BJ (cell line): ENCODE measurements at regions of chr12 and their contacts with region 1.

Region 1: DNA sequence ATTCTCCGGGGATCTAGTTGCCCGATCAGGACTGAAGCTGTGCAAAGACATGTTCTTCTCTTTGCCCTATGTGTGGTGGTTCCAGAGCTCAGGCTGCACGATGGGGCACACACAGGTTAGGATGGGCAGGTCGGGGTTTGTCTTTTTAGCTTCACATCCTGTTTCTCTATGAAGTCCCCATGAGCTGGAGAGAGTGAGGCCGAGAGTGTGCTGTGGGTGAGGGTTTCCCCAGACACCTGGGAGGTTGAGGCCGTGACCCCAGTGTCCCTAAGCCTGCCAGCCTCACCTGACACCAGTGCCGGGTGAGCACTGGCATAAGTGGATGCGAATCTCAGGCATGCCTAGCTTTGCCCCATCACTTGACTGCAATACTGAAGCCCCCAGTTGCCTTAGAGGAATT is 32.9 kb upstream of the IGF1 start:
- DNase-seq: no peak
- H3K4me3 ChIP-seq: no peak overlapping the region
- H3K27me3 ChIP-seq: no peaks in the 10 kb centered on the region
- CTCF ChIP-seq: no peak

Region 2: DNA sequence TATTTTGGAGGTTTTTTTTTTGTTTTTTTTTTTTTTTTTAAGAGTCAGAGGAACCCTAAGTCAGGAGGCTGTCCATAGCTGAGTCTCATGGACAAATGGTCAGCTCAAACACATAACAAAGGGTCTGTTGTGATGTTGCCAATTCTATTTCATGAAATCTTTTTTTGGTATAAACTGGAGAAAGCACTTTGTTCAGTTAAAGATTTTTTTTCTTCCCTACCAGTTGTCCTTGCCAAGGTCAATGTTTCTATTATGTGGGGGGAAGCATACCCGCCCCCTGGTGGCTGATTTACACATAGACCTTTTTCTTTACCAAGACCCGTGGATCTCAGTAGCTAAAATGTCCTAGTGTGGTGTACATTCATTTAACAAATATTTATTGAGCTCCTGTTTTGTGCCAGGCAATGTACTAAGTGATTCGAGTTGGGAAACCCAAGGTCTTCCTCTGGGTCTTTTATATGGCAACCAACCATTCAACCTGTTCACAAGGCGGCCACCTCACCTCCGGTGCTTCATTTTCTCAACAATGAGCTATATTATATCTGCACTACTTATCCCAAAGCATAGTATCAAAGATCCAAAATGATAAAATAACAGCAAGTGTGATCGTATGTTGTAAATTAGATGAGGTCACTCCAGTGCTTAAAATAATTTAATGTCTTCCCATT is 189.3 kb after region 1 on chr12:
- CTCF ChIA-PET with region 1: interaction called, 10 read pairs
- POLR2A ChIA-PET with region 1: no interaction called
- DNase-seq: peak; percentile 29
- H3K4me3 ChIP-seq: no peak overlapping the region
- H3K27me3 ChIP-seq: no peaks in the 10 kb centered on the region
- CTCF ChIP-seq: peak; percentile 74

Region 3: DNA sequence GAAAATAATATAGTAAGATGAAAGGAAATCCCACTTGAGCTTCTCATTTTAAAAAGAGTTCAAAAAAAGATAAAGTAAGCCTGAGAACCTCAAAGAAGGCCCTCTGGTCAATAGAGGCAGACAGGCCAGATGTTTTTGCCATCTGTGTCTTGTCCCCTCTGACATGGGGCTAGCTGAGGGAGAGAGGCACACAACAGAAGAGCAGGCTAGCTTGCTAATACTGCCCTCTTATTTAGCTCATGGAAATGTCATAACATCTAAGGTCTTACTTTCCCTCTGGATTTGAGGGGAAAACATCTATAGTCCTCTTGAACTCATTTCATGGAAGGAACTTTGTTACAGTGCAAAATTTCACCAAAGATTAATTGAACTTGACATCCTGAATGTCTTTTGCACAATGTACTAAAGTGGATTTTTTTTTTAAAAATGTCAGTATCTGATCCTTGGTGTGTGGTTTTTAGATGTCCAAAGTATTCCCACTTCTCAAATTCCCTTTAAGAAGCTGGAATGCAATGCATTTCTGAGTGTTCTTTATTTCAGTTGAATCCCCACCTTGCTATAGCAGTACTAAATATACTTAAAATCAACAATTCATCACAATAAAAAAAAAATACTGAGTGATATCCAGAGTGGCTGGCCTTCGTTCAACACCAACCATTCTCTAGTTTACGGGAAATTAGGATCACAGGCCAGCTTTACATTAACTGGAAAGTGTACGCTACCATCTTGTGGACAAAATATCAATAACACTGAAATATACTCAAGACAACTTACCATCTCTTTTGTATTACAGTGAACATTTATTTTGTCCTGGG is 227.1 kb after region 1 on chr12:
- CTCF ChIA-PET with region 1: interaction called, 11 read pairs
- POLR2A ChIA-PET with region 1: no interaction called
- DNase-seq: peak; percentile 31
- H3K4me3 ChIP-seq: no peak overlapping the region
- H3K27me3 ChIP-seq: no peaks in the 10 kb centered on the region
- CTCF ChIP-seq: peak; percentile 44

Region 4: DNA sequence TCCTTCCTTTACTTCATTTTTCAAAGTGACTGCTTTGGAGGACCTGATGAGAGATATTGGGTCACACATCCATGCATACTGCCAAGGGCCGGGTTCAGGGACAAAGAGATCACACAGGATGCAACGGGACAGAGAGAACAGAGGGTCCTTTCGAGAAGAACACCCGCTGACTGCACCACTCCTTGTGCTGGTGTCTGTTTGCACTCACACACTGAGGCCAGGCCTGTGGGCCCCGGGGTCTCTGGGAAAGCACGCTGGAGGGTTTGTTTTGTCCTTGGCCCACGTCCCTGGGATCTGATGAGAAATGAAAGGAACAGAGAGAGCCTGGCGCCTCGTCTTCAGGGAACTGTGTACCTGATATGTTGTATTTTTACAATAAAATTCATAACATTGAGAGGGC is 361.5 kb after region 1 on chr12:
- CTCF ChIA-PET with region 1: no interaction called
- POLR2A ChIA-PET with region 1: no interaction called
- DNase-seq: no peak
- H3K4me3 ChIP-seq: no peak overlapping the region
- H3K27me3 ChIP-seq: no peaks in the 10 kb centered on the region
- CTCF ChIP-seq: no peak